CD4-positive, alpha-beta memory T cell (primary cell): ENCODE measurements at regions of chr11 and their contacts with region 1.

Region 1: GRCh38 chr11:18634140-18635032 is at the start of gene SPTY2D1:
- DNase-seq: peak; percentile 96 to 100 (median 98)
- H3K4me3 ChIP-seq: peak within 1 kb of the TSS; percentile 91 to 99
- H3K4me3 Mint-ChIP-seq: peak within 1 kb of the TSS; percentile 92 to 99 (median 98)
- H3K27ac ChIP-seq: peak within 1 kb of the TSS; percentile 93
- H3K27ac Mint-ChIP-seq: peak within 1 kb of the TSS; percentile 97 to 100 (median 99)
- H3K4me1 ChIP-seq: peaks cover 21% of the 10 kb centered on the region
- H3K4me1 Mint-ChIP-seq: peaks cover 21 to 48% (median 31%) of the 10 kb centered on the region in 4 donors
- H3K27me3 ChIP-seq: no peaks in the 10 kb centered on the region
- H3K27me3 Mint-ChIP-seq: no peaks in the 10 kb centered on the region
- total RNA-seq, gene SPTY2D1: 23.0 to 25.2 TPM

Region 2: DNA sequence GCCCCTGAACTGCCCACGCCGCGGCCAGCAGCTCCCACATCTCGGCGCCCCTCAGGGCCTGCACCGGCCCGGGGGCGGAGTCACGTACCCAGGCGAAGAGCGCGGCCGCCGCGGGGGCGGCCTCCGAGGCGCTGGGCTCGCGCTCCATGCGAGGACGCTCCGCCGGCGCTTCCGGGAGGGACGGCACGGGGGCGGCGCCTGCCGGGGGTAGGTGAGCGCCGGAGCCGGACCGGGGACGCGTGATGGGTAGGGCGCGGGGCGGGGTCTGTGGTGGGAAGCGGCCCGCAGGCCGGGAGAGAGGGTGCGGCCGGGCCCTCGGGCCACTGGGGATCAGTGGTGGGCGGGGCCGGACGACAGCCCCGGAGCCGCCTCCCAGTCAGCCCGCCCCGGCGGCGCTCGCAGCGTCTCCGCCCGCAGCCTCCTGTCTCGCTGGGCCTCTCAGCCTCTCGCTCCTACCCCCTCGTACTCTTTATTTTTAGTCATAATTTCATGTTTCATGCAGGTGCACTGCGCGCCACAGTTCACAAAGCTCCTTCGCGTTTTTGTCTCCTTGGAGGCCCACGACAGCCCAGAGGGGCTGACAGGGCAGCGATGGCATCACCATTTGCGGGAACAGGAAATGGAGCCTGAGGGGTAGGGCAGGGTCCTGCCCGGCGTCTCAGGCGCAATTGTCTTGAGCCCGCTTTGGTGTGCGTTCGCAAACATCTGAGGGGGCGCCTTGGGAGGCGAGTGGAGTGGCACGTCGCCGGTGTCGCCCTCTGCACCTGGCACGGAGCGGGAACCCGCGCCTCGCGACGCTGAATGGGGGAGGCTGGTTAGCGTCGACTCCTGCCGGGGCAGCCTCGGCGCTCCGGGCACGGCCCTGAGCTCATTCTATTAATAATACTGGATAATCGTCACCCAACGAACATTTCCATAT is 621.3 kb before region 1 on chr11 and contains the start of gene SERGEF:
- CTCF ChIA-PET with region 1: no interaction called
- POLR2A ChIA-PET with region 1: no interaction called
- intact Hi-C with region 1: loop called (anchors 1 kb)
- DNase-seq: peak; percentile 91 to 92 (median 91)
- H3K4me3 ChIP-seq: peak within 1 kb of the TSS; percentile 72 to 94
- H3K4me3 Mint-ChIP-seq: peak within 1 kb of the TSS; percentile 93 to 99 (median 96)
- H3K27ac ChIP-seq: peak within 1 kb of the TSS; percentile 73
- H3K27ac Mint-ChIP-seq: peak within 1 kb of the TSS; percentile 94 to 100 (median 98)
- H3K4me1 ChIP-seq: peaks cover 19% of the 10 kb centered on the region
- H3K4me1 Mint-ChIP-seq: peaks cover 18 to 41% (median 26%) of the 10 kb centered on the region in 4 donors
- H3K27me3 ChIP-seq: no peaks in the 10 kb centered on the region
- H3K27me3 Mint-ChIP-seq: no peaks in the 10 kb centered on the region
- total RNA-seq, gene SERGEF: 46.2 to 54.1 TPM

Region 3: DNA sequence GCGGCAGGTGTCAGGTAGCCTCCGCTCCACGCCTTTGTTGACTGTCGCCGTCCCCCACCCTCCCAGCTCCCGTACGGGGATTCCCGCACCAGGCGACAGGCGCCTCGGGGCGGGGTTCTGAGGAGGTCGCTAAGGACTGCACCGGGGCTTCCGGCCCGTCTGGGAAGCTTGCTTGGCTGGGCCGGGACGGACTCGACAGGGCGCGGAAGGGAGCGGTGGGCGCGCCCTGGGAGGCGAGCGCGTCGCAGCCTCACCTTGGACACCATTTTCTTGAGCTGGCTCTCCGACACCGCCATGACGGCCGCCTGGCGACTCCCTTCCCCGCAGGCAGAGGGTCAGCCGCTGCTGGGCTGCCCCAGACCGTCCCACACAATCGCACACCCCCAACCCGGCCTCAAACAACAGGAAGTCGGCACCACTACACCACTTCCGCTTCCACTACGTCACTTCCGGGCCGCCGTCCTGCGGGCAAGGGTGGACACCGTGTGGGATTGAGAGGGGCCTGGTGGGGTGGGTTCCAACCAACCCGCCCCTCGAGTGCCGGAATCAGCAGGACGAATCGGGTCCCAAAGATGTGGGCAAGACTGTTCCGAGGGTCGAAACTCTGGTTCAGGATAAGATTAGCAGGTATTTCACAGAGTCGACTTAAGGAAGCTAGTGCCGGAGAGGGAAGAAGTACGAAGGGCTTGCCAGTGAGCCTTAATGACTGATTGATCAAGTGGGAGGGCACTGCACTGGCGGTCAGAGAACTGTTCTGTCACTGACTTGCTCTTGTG is 107.7 kb before region 1 on chr11 and contains the start of gene TSG101:
- CTCF ChIA-PET with region 1: interaction called, 6 read pairs
- POLR2A ChIA-PET with region 1: interaction called, 41 read pairs
- intact Hi-C with region 1: loop called (anchors 1 kb)
- DNase-seq: peak; percentile 91 to 94 (median 92)
- H3K4me3 ChIP-seq: peak within 1 kb of the TSS; percentile 70 to 72
- H3K4me3 Mint-ChIP-seq: peak within 1 kb of the TSS; percentile 99 to 100 (median 100)
- H3K27ac ChIP-seq: peak within 1 kb of the TSS; percentile 99
- H3K27ac Mint-ChIP-seq: peak within 1 kb of the TSS; percentile 100
- H3K4me1 ChIP-seq: peaks cover 38% of the 10 kb centered on the region
- H3K4me1 Mint-ChIP-seq: peaks cover 32 to 57% (median 42%) of the 10 kb centered on the region in 4 donors
- H3K27me3 ChIP-seq: no peaks in the 10 kb centered on the region
- H3K27me3 Mint-ChIP-seq: no peaks in the 10 kb centered on the region
- total RNA-seq, gene TSG101: 40.0 to 41.2 TPM

Region 4: DNA sequence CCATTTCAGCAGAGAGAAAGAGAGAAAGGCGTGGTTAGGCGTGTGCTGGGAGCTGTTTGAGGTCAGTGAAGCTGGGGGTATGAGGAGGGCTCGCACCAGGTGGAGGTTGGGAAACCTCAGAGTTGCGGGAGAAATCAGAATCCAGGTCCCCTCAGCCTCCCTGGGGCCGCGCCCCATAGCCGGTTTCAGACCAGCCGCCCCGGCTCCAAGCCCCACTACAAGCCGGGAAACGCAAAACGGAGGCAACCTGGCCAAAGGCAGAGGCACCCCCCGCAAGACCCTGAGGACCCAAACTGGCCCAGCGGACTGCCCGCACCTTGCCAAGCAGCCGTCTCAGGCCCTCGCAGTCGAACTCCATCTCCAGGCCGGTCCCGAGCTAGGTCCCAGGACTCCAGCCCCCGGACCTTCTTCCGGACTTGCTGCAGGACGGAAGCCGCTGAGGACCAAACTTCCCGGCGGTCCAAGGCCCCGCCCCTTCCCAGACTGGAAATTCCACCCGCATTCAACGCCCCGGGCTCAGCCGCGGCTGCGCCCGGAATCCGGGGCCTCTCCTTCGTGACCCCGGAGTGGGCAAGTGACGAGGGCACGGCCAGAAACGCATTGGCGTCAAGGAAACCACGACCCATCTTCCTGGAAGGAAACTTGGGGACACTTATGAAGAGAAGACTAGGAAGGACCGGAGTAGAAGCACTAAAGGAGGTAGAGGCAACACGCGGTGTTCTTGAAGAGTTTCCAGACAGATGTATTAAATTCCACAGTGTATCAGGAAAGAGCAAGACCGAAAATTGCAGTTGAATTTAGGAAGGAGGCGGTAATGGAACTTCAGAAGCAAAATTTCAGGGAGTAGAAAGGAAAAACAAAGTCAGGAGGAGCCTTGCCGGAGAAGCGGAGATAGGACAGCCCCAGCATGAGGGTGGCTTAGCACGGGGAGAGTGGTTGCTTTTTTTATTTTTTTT is 45.8 kb before region 1 on chr11 and contains the start of gene UEVLD:
- CTCF ChIA-PET with region 1: interaction called, 3 read pairs
- POLR2A ChIA-PET with region 1: interaction called, 29 read pairs
- intact Hi-C with region 1: loop called (anchors 1 kb)
- DNase-seq: peak; percentile 45 to 72 (median 48)
- H3K4me3 ChIP-seq: peak within 1 kb of the TSS; percentile 8 to 56
- H3K4me3 Mint-ChIP-seq: no peak within 1 kb of the TSS
- H3K27ac ChIP-seq: peak within 1 kb of the TSS; percentile 91
- H3K27ac Mint-ChIP-seq: no peak within 1 kb of the TSS
- H3K4me1 ChIP-seq: peaks cover 48% of the 10 kb centered on the region
- H3K4me1 Mint-ChIP-seq: peaks cover 0 to 13% (median 11%) of the 10 kb centered on the region in 4 donors
- H3K27me3 ChIP-seq: no peaks in the 10 kb centered on the region
- H3K27me3 Mint-ChIP-seq: no peaks in the 10 kb centered on the region
- total RNA-seq, gene UEVLD: 10.6 to 10.7 TPM

Region 5: DNA sequence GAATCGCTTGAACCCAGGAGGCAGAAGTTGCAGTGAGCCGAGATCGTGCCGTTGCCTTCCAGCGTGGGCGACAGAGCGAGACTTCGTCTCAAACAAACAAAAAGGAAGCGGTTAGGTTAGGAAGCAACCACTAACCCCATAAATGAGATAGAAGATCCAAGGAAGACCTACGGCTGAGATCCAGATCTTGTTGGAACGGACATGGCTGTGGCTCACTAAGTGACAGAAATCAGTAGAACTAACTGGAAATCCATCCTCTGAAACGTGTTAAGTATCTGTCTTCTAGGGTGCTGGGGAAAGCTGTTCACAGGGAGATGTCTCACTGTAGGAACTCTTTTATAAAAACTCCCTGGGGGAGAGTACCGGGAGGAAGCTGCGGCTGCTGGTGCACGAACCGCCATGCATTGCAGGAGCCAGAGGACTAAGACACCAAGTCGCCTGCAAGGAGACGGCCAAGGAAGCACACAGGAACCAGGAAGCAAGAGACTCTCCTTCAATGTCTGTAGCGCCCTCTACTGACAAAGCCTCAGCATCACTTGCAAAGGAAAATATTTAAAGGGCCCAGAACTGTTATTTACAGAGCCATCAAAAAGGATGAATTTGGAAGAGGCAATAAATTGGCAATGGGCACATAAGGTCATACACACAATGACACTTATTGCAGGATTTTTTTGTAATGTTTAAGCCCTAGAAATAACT is 16.6 kb after region 1 on chr11:
- CTCF ChIA-PET with region 1: interaction called, 4 read pairs
- POLR2A ChIA-PET with region 1: interaction called, 11 read pairs
- intact Hi-C with region 1: no loop called
- DNase-seq: peak; percentile 57 to 64 (median 62)
- H3K4me3 ChIP-seq: no peak overlapping the region
- H3K4me3 Mint-ChIP-seq: peak overlapping the region in 4 of 8 donors; percentile 17 to 76 (median 48)
- H3K27ac ChIP-seq: no peak overlapping the region
- H3K27ac Mint-ChIP-seq: peak overlapping the region in 5 of 7 donors; percentile 59 to 90 (median 75)
- H3K4me1 ChIP-seq: no peaks in the 10 kb centered on the region
- H3K4me1 Mint-ChIP-seq: peaks cover 5 to 10% (median 8%) of the 10 kb centered on the region in 4 donors
- H3K27me3 ChIP-seq: no peaks in the 10 kb centered on the region
- H3K27me3 Mint-ChIP-seq: no peaks in the 10 kb centered on the region

Region 6: GRCh38 chr11:18706330-18707243 is 72.2 kb after region 1 on chr11:
- CTCF ChIA-PET with region 1: interaction called, 4 read pairs
- POLR2A ChIA-PET with region 1: interaction called, 15 read pairs
- intact Hi-C with region 1: loop called (anchors 2 kb)
- DNase-seq: peak; percentile 50 to 77 (median 61)
- H3K4me3 ChIP-seq: peak overlapping the region; percentile 53 to 60
- H3K4me3 Mint-ChIP-seq: peak overlapping the region; percentile 91 to 97 (median 95)
- H3K27ac ChIP-seq: peak overlapping the region; percentile 52
- H3K27ac Mint-ChIP-seq: peak overlapping the region; percentile 78 to 98 (median 96)
- H3K4me1 ChIP-seq: peaks cover 13% of the 10 kb centered on the region
- H3K4me1 Mint-ChIP-seq: peaks cover 13 to 30% (median 21%) of the 10 kb centered on the region in 4 donors
- H3K27me3 ChIP-seq: no peaks in the 10 kb centered on the region
- H3K27me3 Mint-ChIP-seq: no peaks in the 10 kb centered on the region